Uterus (tissue), 4 donors: ENCODE measurements at regions of chr10 and their contacts with region 1.

Region 1: GRCh38 chr10:13787015-13787421 is 200.3 kb downstream of the PRPF18 start:
- DNase-seq: no peak
- H3K4me3 ChIP-seq: no peak overlapping the region
- H3K27ac ChIP-seq: peak overlapping the region in 1 of 2 donors; percentile 33
- H3K4me1 ChIP-seq: no peaks in the 10 kb centered on the region
- H3K27me3 ChIP-seq: no peaks in the 10 kb centered on the region
- CTCF ChIP-seq: no peak
- POLR2A ChIP-seq: no peak

Region 2: DNA sequence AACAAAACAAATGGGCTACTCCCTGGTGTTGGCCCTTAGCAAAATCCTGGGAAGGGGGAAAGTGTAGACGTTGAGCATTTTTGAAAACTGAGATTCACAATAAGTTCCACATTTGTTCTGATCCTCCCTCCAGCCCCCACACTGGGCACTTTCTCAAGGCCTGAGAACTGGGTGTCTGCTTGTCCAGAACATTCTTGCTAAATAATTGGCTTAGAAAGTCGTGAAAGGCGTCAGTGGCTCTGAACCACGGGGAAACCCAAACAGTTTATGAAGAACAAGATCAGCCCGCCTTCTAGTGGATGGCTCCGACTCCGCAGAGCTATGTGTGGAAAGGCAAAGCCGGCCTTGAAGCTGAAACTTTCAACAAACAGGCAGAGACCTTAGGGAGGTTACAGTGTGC is 169.8 kb after region 1 on chr10:
- intact Hi-C with region 1: loop called (anchors 5 kb)
- DNase-seq: peak; percentile 70 to 82
- H3K4me3 ChIP-seq: no peak overlapping the region
- H3K27ac ChIP-seq: peak overlapping the region; percentile 49 to 72
- H3K4me1 ChIP-seq: no peaks in the 10 kb centered on the region
- H3K27me3 ChIP-seq: no peaks in the 10 kb centered on the region
- CTCF ChIP-seq: peak; percentile 34 to 50 (median 38)
- POLR2A ChIP-seq: no peak

Region 3: DNA sequence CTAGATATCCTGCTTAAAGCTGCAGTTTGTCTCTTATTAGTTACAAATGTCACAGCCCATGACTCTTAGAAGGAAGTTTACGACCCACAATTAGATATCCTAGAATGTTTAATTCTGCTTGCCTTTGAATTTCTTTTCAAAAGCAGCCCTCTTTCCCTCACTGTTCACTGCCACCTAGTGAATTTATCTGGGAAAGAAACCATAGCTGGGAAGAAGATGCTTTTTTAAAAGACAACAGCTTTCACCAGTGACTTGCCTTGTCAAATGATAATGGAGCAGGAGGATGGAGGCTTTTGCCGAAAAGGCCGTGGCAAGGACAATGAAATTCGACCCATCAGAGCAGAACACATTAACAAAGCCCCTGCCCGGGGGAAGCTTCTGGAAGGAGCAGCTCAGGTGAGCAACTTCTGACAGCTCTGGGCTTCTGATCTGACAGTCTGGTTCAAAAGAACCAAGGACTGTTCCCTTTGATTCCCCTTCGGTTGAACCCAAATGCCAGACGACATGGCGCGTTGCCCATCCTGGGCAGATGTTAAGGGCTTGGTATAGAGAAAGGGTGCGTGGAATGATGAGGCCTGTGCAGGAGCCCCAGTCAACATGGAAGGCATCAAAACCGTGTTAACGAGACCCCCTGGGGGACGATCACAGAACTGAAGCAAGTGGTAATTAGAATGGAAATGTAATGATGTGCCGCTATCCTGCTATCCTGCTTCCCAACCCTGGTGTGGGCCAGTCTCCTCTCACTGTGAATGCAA is 306.9 kb after region 1 on chr10:
- intact Hi-C with region 1: loop called (anchors 10 kb)
- DNase-seq: no peak
- H3K4me3 ChIP-seq: no peak overlapping the region
- H3K27ac ChIP-seq: no peak overlapping the region
- H3K4me1 ChIP-seq: no peaks in the 10 kb centered on the region
- H3K27me3 ChIP-seq: no peaks in the 10 kb centered on the region
- CTCF ChIP-seq: peak; percentile 23 to 60 (median 45)
- POLR2A ChIP-seq: no peak